ENCODE measurements at regions of chr9 and their contacts with region 1.

Region 1: DNA sequence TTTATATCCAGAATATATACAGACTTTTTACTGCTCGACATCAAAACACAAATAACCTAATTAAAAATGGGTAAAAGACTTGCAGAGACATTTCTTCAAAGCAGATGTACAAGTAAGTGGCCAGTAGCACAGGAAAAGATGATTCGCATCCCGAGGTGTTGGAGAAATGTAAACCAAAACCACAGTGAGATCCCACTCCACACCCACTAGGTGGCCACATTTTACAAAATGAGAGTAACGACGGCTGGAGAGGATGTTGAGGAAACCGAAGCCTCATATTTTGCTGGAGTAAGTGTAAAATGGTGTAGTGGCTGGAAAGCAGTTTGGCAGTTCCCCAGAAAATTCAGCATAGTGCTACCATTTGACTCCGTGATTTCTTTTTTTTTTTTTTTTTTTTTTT is 21.2 kb upstream of the GBGT1 start:
- DNase-seq: peak in 1 of 3 donors; percentile 56
- ATAC-seq: peak; percentile 83
- H3K4me3 ChIP-seq: no peak overlapping the region
- H3K4me1 ChIP-seq: no peaks in the 10 kb centered on the region
- CTCF ChIP-seq: no peak

Region 2: DNA sequence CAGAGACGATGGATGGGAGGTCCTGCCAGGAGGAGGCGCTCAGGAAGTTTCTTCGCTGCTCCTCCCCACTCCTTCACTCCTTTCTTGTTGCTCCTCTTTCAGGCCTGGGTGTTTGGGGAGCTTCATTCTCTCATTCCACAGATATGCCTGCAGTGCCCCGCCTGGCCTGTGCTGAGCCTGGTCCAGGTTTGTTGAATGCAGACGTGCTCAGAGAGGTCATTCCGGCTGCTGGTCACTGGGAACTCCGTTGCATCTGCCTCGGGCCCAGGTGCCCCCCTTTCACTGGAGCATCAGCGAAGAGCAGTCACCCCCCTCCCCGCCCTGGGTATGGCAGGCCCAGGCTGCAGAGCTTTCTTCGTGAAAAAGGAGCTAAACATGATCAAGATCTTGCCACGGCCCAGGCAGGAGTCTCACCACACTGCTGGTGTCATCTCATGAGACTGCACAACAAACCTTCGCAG is 135.5 kb after region 1 on chr9:
- intact Hi-C with region 1: loop called in 1 of 2 experiments (anchors 10 kb)
- DNase-seq: no peak
- ATAC-seq: no peak
- H3K4me3 ChIP-seq: no peak overlapping the region
- H3K4me1 ChIP-seq: no peaks in the 10 kb centered on the region
- CTCF ChIP-seq: no peak

Region 3: DNA sequence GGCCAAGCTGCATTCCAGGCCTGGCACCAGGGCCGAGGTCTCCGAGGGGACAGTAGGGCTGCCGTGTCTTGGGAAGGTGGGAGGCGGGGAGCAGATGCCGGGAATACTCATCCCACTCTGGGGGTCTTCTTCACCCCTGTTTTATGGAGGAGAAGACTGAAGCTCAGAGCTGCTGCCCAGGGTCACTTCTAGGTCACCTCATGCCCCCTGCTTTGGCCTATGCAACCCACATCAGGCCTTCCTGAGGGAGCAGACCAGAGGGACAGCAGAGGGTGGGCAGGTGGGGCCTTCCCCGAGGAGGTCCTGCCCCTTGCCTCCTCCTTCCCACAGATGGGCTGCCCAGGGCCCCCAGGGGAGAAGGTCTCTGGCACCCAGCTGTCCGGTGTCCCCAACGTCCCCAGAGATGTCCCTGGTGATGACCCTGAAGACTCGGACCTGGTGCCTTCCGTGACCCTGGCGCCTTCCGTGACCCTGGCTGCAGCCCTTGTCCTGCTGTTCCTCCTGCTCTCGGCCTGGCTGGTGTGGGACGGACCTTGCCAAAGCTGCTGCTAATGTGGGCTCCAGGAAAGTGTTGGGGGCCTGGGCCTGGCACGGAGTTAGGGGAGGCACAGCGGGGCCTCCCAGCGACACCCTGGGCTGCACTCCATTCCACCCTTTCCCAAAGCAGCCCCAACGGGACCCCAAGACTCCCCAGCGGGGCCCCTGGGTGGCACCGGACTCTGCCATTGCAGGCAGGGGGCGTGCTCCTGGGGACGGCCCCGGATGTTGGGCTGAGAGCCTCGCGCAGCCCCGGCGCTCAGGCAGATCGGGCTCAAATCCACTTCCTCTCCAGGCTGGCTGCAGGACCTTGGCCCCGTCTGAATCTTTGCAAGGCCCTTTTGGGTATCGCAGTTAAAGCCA is 300.6 kb after region 1 on chr9:
- intact Hi-C with region 1: loop called (anchors 10 kb)
- DNase-seq: peak in 2 of 3 donors; percentile 38 to 46
- ATAC-seq: peak; percentile 36
- H3K4me3 ChIP-seq: no peak overlapping the region
- H3K4me1 ChIP-seq: no peaks in the 10 kb centered on the region
- CTCF ChIP-seq: no peak